ENCODE measurements at regions of chr22 and their contacts with region 1.

Region 1: DNA sequence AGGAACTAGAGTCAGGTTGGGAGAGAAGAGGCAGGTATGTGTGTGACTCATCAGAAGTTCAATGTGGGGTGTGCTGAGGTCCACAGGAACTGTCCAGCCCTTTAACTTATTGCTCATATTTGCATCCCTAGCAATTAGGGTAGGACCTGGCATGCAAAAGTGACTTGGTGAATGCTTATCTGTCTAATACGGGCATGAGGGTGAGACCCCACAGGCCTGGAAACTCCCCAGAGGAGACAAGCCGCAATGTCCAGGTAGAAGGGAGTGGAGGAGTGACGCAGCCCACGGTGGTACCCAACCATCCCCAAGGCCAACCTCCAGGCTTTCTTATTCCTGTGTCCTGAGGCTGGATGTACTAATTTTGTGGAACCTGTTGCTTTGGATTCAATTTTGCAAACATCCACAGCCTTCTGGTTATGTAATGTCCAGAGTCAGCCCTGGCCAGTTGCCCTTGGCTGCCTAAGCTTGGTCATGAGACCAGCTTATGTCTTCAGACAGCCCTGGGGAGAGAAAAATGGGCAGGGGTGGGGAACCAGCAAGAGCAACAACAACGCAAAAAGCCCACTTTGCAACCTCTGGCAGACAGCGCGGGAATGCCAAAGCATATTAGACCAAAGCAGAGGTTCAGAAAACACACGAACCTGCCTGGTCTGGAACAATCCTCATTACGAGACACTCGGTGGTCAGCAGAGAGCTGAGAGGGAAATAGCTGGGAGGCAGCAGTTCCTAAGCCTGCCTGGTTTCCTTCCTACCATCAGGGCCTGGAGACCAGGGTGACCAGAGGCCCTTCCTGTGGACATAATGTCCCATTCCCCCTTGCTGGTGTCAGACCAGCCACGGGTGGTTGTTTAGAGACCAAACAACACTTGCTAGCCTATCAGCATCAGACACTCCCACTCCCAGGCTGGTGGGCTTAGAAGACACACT is 49.3 kb downstream of the TIMP3 start:
- DNase-seq: peak; percentile 97
- H3K4me3 ChIP-seq: no peak overlapping the region
- H3K27ac ChIP-seq: peak overlapping the region; percentile 70 to 82 (median 78)
- H3K4me1 ChIP-seq: peaks cover 0 to 76% (median 71%) of the 10 kb centered on the region in 4 donors
- H3K27me3 ChIP-seq: no peaks in the 10 kb centered on the region
- CTCF ChIP-seq: no peak
- EP300 ChIP-seq: peak in 2 of 4 donors; percentile 3 to 79
- POLR2A ChIP-seq: no peak

Region 2: GRCh38 chr22:32803020-32803754 is 47.7 kb before region 1 on chr22:
- intact Hi-C with region 1: loop called (anchors 2 kb)
- DNase-seq: peak; percentile 72
- H3K4me3 ChIP-seq: peak overlapping the region; percentile 75 to 93 (median 78)
- H3K27ac ChIP-seq: peak overlapping the region; percentile 89 to 94 (median 91)
- H3K4me1 ChIP-seq: peaks cover 0 to 55% (median 46%) of the 10 kb centered on the region in 4 donors
- H3K27me3 ChIP-seq: no peaks in the 10 kb centered on the region
- CTCF ChIP-seq: no peak
- EP300 ChIP-seq: no peak
- POLR2A ChIP-seq: no peak

Region 3: DNA sequence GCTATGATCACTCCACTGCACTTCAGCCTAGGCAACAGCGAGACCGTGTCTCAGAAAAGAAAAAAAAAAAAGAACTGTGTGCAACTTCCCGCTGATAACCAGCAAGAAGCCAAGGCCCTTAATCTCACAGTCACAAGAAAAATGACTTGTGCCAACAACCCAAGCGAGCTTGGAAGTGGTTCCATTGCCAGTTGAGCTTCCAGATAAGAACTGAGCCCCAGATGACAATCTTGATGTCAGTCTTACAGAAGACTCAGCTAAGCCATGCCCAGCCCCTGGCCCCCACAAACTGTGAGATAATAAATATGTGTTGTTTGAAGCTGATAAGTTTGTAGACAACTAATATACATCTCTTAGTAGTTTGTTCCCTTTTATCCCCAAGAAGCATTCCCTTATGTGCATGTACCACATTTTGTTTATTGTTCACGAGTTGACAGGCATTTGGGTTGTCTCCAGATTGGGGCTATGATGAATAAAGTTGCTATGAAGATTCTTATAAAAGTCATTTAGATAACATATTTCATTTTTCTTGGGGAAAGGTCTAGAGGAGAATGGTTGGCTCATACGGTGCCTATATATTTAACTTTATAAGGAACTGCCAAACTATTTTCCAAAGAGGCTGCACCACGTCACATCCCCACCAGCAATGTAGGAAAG is 36.6 kb after region 1 on chr22:
- intact Hi-C with region 1: no loop called
- DNase-seq: no peak
- H3K4me3 ChIP-seq: no peak overlapping the region
- H3K27ac ChIP-seq: no peak overlapping the region
- H3K4me1 ChIP-seq: peaks cover 0 to 14% (median 13%) of the 10 kb centered on the region in 4 donors
- H3K27me3 ChIP-seq: no peaks in the 10 kb centered on the region
- CTCF ChIP-seq: no peak
- EP300 ChIP-seq: no peak
- POLR2A ChIP-seq: no peak

Region 4: GRCh38 chr22:32905400-32905799 is 54.5 kb after region 1 on chr22:
- intact Hi-C with region 1: loop called (anchors 5 kb)
- DNase-seq: peak; percentile 78
- H3K4me3 ChIP-seq: no peak overlapping the region
- H3K27ac ChIP-seq: peak overlapping the region in 3 of 4 donors; percentile 22 to 61 (median 59)
- H3K4me1 ChIP-seq: peaks cover 0 to 39% (median 23%) of the 10 kb centered on the region in 4 donors
- H3K27me3 ChIP-seq: no peaks in the 10 kb centered on the region
- CTCF ChIP-seq: no peak
- EP300 ChIP-seq: no peak
- POLR2A ChIP-seq: no peak

Measured in sigmoid colon (tissue), 7 donors.